ENCODE measurements at regions of chr13 and their contacts with region 1.

Region 1: GRCh38 chr13:97109841-97110492 is 112.2 kb upstream of the MBNL2 start:
- DNase-seq: peak; percentile 79
- H3K4me3 Mint-ChIP-seq: no peak overlapping the region
- H3K27ac Mint-ChIP-seq: no peak overlapping the region
- H3K4me1 Mint-ChIP-seq: peaks cover 7% of the 10 kb centered on the region
- H3K27me3 Mint-ChIP-seq: peaks cover 8% of the 10 kb centered on the region

Region 2: DNA sequence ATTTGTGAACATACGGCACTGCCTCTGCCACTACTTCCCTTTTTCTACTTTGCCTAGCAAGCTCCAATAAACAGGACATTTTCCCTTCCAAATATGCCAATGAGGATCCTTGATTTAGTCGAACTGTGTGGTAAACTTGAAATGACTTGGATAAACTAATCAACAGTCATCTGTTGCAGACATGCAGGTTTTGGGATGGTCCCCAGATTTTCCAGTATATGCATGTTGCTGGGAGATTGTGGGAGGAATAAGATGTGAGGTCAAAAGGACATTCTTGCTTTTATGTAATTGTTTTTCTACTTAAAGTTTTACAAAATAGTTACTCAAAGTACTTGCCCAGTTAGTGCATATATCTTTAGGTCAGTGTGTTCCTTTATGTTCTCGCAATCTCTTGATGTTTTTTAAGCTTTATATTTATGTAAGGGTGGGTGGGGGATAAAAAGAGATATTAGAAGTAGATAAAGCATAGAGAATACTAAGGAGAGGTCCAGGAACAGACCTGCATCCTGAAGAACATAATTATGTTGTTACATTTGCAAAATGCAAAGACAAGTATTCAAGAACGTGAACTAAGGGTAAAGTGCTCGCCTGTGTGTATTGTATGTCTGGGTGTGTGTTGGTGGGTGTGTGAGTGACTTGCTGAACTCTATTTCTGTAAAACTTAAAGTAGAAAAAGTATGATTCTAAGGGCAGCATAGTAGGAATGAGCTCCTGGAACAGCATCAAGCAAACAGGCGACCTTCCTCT is 27.3 kb before region 1 on chr13:
- CTCF ChIA-PET with region 1: no interaction called
- POLR2A ChIA-PET with region 1: no interaction called
- DNase-seq: no peak
- H3K4me3 Mint-ChIP-seq: no peak overlapping the region
- H3K27ac Mint-ChIP-seq: no peak overlapping the region
- H3K4me1 Mint-ChIP-seq: no peaks in the 10 kb centered on the region
- H3K27me3 Mint-ChIP-seq: no peaks in the 10 kb centered on the region

Region 3: GRCh38 chr13:97148894-97149293 is 38.9 kb after region 1 on chr13:
- CTCF ChIA-PET with region 1: no interaction called
- POLR2A ChIA-PET with region 1: no interaction called
- DNase-seq: no peak
- H3K4me3 Mint-ChIP-seq: no peak overlapping the region
- H3K27ac Mint-ChIP-seq: no peak overlapping the region
- H3K4me1 Mint-ChIP-seq: no peaks in the 10 kb centered on the region
- H3K27me3 Mint-ChIP-seq: peaks cover 18% of the 10 kb centered on the region

Region 4: GRCh38 chr13:97212601-97213040 is 102.7 kb after region 1 on chr13:
- CTCF ChIA-PET with region 1: interaction called, 17 read pairs
- POLR2A ChIA-PET with region 1: no interaction called
- DNase-seq: no peak
- H3K4me3 Mint-ChIP-seq: no peak overlapping the region
- H3K27ac Mint-ChIP-seq: no peak overlapping the region
- H3K4me1 Mint-ChIP-seq: peaks cover 46% of the 10 kb centered on the region
- H3K27me3 Mint-ChIP-seq: no peaks in the 10 kb centered on the region

Region 5: DNA sequence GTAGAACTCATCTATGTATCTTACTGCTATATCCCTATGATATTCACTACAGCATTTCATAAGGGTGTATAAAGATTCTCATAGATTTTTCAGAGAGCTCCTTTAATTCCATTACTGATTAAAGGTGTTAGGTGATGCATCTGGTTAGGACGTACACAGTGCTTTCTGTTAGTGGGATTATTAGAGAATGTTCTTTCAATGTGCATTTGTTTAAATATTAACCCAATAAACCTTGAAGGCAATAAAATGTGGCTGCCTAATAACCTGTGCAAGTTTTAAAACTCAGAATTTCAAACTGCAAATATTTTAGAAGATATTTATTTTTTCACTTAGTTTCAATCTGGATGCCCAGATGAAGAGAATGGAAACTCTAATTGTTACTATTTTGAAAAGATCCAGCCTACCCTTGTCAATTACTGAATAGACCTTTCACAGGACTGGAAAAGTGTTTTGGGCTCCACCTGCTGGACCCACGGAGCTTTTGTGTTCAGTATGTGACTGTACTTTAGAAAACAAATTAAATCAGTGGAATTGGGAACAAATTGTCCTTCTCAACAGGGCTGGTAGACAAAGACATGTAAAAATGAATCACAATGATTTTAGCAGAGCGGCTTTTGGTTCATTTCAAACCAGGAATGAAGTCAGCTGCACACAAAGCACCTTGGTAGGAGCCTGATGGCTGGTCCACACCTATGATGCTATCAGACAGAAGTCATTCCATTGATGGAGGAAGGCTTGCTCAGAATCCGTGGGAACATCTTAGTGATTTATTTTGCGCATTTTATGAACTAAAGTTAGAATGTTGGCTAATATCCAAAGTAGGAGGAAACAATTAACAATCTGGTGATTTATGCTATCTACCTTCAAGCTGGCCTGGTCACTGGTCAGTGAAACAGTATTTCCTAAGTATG is 234.6 kb after region 1 on chr13:
- CTCF ChIA-PET with region 1: interaction called, 108 read pairs
- POLR2A ChIA-PET with region 1: no interaction called
- DNase-seq: peak; percentile 59
- H3K4me3 Mint-ChIP-seq: no peak overlapping the region
- H3K27ac Mint-ChIP-seq: no peak overlapping the region
- H3K4me1 Mint-ChIP-seq: peaks cover 10% of the 10 kb centered on the region
- H3K27me3 Mint-ChIP-seq: no peaks in the 10 kb centered on the region

Region 6: DNA sequence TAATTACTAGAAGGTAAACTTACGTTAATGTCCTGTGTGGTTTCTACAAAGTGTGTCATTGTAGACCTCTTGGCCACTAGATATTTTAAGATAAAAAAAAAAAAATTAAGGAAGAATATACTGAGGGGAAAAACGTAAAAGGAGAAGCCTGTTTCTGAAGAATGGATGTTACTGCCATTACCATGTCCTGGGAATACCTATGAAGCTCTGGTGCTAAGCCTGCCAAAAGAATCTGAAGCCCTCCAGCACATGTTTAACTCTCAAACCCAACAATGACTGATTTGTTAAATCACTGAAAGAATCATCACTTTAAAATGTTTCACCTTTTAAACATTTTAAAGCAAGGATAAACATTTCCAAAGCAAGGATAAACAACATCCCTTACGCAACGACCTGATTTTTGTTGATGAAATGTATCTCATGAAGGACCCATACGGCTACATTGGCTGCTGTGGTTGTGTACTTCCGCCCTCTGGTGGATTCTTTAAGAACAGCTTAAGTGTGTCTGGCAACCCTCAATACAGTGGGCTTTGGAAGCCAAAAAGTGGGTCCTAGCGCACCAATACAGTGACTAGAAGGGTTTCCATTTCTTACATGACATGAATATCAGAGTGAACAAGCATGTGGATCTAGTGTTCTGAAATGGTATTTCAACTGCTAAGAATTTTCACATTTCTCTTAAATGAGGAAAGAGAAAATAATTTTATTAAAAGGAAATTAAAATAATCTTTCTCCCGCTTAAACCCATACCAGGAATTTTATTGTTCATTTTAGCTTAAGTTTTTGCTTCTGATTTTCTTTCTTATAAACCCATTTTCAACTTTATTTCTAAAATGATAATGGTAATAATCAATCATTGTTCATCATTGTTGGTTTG is 249.5 kb after region 1 on chr13:
- CTCF ChIA-PET with region 1: interaction called, 130 read pairs
- POLR2A ChIA-PET with region 1: interaction called, 3 read pairs
- DNase-seq: peak; percentile 50
- H3K4me3 Mint-ChIP-seq: no peak overlapping the region
- H3K27ac Mint-ChIP-seq: no peak overlapping the region
- H3K4me1 Mint-ChIP-seq: no peaks in the 10 kb centered on the region
- H3K27me3 Mint-ChIP-seq: no peaks in the 10 kb centered on the region

Region 7: GRCh38 chr13:97432917-97433726 is 323.2 kb after region 1 on chr13:
- CTCF ChIA-PET with region 1: interaction called, 22 read pairs
- POLR2A ChIA-PET with region 1: no interaction called
- DNase-seq: peak; percentile 99
- H3K4me3 Mint-ChIP-seq: peak overlapping the region; percentile 99
- H3K27ac Mint-ChIP-seq: peak overlapping the region; percentile 100
- H3K4me1 Mint-ChIP-seq: peaks cover 29% of the 10 kb centered on the region
- H3K27me3 Mint-ChIP-seq: peaks cover 4% of the 10 kb centered on the region

Measured in activated CD4-positive, alpha-beta memory T cell treated with anti-CD3 and anti-CD28 coated beads, Interleukin-2, amount 10 ng/mL, durations not matched to agents 7 days and 5 days (primary cell).